Prostate gland (tissue), 2 donors: ENCODE measurements at regions of chr5 and their contacts with region 1.

Region 1: GRCh38 chr5:135013947-135014570 is 20.0 kb downstream of the PITX1 start:
- DNase-seq: peak; percentile 76
- H3K4me3 ChIP-seq: no peak overlapping the region
- H3K27ac ChIP-seq: peak overlapping the region; percentile 19 to 37
- H3K4me1 ChIP-seq: peaks cover 6% of the 10 kb centered on the region
- H3K27me3 ChIP-seq: no peaks in the 10 kb centered on the region
- CTCF ChIP-seq: no peak
- POLR2A ChIP-seq: no peak

Region 2: GRCh38 chr5:134845852-134846640 is 168.0 kb before region 1 on chr5 and contains the start of gene C5orf24:
- intact Hi-C with region 1: loop called (anchors 10 kb)
- DNase-seq: peak; percentile 91
- H3K4me3 ChIP-seq: peak within 1 kb of the TSS; percentile 95 to 99
- H3K27ac ChIP-seq: peak within 1 kb of the TSS; percentile 96 to 97
- H3K4me1 ChIP-seq: peaks cover 6% of the 10 kb centered on the region
- H3K27me3 ChIP-seq: no peaks in the 10 kb centered on the region
- CTCF ChIP-seq: peak in 1 of 4 experiments; percentile 25
- POLR2A ChIP-seq: peak; percentile 94
- total RNA-seq, gene C5orf24: 30.4 to 39.5 TPM

Region 3: DNA sequence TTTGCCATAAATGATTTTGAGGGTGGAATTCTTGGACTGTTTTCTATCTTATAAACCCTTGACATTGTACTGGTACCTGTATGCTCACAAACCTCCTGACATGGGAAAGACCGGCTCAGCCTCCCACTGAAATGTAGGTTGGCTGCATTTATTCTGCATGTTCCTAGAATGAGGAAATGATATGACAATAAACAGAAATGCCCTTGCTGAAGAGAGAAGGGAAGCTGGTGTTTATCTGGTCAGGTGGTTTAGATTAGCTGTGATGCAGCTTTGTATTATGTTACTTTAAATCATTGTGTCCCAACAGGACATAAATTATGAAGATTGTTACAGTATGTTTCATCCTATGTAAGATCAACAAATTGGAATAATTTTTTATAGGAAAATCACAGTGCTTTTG is 69.4 kb before region 1 on chr5:
- intact Hi-C with region 1: loop called (anchors 2 kb)
- DNase-seq: no peak
- H3K4me3 ChIP-seq: no peak overlapping the region
- H3K27ac ChIP-seq: no peak overlapping the region
- H3K4me1 ChIP-seq: no peaks in the 10 kb centered on the region
- H3K27me3 ChIP-seq: no peaks in the 10 kb centered on the region
- CTCF ChIP-seq: no peak
- POLR2A ChIP-seq: no peak

Region 4: DNA sequence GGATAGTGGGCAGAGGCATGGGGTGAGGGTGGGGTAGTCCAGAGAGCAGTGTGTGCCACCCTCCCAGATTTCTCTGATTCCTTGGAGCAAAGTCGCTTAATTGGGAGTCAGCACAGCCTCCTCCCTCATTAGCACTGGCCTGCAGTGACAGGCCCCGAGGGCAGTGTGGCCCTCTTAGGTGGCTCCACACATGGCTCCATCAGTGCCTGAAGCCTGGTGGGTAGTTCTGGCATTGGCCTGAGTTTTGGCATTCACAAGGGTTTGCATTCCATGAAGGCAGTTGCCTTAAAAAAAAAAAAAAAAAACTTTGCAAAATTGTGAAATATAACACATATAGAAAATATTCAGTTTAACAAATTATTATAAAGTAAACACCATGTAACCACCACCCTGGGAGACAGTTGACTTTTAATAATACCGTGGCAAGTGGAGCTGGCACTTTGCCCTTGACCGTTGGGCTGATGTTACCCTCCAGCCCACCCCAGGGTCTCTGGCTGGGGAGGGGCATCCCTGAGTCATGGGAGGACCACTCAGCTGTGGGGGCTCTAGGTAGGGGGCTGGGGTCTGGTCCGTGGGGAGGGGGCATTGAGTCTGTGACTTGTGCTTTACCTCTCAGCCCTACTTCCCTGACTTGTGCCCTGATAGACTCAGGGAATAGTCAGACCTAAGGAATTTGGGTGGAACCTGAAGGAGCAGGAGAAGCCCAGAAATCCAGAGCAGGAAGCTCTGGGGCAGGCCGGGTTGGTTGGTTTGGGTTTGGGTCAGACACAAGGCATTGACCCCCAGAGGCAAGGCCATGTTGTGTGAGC is 71.3 kb after region 1 on chr5:
- intact Hi-C with region 1: no loop called
- DNase-seq: no peak
- H3K4me3 ChIP-seq: no peak overlapping the region
- H3K27ac ChIP-seq: no peak overlapping the region
- H3K4me1 ChIP-seq: no peaks in the 10 kb centered on the region
- H3K27me3 ChIP-seq: no peaks in the 10 kb centered on the region
- CTCF ChIP-seq: no peak
- POLR2A ChIP-seq: no peak

Region 5: DNA sequence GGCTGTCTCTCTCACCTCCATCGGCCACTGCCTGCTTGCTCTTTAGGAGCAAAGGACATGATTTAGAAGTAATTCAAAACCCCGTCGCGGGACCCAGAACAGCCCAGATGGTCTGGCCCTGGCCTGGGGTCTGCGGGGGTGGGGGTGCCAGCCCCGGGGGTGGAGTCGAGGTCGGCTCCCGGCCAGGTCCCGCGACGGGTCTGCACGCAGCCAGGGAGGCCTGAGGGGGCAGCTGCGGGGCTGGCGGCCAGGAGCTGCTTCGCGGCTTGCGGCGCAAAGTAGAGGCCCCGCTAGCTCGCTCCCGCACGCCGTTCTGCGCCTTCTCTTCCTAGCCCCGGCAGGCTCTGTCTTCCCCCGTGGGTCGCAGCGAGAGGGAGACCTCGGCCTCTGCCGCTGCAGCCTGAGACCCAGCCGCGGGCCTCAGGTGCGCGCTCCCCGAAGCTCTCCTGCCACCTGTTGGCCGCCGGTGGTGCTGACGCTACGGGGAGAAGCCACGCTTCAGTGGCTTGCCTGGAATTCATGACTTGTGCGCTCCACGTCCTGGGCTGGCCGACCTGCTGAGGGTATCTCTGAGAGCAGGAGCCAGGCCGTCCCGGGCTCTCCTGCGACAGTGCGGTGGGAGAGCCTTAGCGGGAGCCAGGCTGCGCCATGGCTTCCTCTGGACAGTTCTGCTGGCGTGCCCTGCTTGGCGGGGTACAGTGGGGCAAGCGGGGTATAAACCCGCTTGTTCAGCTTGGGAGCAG is 177.2 kb after region 1 on chr5:
- intact Hi-C with region 1: loop called (anchors 5 kb)
- DNase-seq: peak; percentile 73
- H3K4me3 ChIP-seq: peak overlapping the region; percentile 26 to 28
- H3K27ac ChIP-seq: peak overlapping the region; percentile 28 to 69
- H3K4me1 ChIP-seq: no peaks in the 10 kb centered on the region
- H3K27me3 ChIP-seq: no peaks in the 10 kb centered on the region
- CTCF ChIP-seq: peak; percentile 74 to 96 (median 88)
- POLR2A ChIP-seq: no peak